Naive thymus-derived CD8-positive, alpha-beta T cell (primary cell): ENCODE measurements at regions of chr6 and their contacts with region 1.

Region 1: DNA sequence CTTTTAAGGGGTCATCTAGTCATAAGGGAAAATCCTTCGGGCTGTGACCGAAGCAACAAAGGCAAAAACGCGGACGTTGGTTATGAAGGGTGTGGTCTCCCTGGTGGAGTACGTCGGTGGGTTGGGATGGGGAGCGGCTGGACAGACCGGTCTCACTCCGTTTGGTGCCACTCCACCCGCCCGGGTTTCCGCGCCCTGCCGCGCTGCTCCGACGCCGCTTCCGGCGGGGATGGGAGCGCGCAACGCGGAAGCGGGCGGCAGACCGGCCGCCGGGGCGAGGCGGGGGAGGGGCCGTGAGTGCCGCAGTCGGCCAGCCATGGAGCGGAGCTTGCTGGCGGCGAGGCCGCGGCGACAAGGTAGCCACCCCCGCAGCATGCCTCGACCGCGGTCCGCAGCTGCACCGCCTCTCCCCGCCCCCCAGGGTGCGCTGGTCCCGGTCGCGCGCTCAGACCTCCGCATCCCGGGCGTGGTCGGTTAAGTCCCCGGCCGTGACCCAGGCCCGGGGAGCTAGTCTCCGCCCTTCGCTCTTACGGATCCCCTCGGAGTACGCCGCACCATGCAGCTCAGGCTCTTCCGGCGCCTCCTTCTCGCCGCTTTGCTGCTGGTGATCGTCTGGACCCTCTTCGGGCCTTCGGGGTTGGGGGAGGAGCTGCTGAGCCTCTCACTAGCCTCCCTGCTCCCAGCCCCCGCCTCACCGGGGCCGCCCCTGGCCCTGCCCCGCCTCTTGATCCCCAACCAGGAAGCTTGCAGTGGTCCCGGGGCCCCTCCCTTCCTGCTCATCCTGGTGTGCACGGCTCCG is at the start of gene B3GALT4:
- DNase-seq: peak; percentile 37 to 78 (median 64)
- ATAC-seq: peak; percentile 72 to 76
- H3K4me3 Mint-ChIP-seq: peak within 1 kb of the TSS; percentile 88 to 96 (median 92)
- H3K27ac Mint-ChIP-seq: peak within 1 kb of the TSS; percentile 72 to 97 (median 94)
- H3K4me1 Mint-ChIP-seq: peaks cover 34 to 80% (median 77%) of the 10 kb centered on the region in 4 donors
- H3K27me3 Mint-ChIP-seq: no peaks in the 10 kb centered on the region
- polyA plus RNA-seq, gene B3GALT4: 14.5 to 20.4 (median 18.7) TPM

Region 2: GRCh38 chr6:33288921-33289748 is 12.1 kb after region 1 on chr6 and contains the starts of genes PFDN6 and WDR46:
- POLR2A ChIA-PET with region 1: interaction called, 128 read pairs
- DNase-seq: peak; percentile 53 to 91 (median 81)
- ATAC-seq: peak; percentile 96 to 97
- H3K4me3 Mint-ChIP-seq: peak within 1 kb of the TSS; percentile 87 to 100 (median 99)
- H3K27ac Mint-ChIP-seq: peak within 1 kb of the TSS; percentile 84 to 97 (median 94)
- H3K4me1 Mint-ChIP-seq: peaks cover 22 to 51% (median 48%) of the 10 kb centered on the region in 4 donors
- H3K27me3 Mint-ChIP-seq: no peaks in the 10 kb centered on the region
- polyA plus RNA-seq, gene PFDN6: 33.4 to 38.2 (median 35.5) TPM
- polyA plus RNA-seq, gene WDR46: 71.3 to 83.7 (median 74.1) TPM

Region 3: GRCh38 chr6:33299237-33299944 is 22.3 kb after region 1 on chr6:
- POLR2A ChIA-PET with region 1: interaction called, 106 read pairs
- DNase-seq: peak; percentile 86 to 95 (median 92)
- ATAC-seq: peak; percentile 82 to 88
- H3K4me3 Mint-ChIP-seq: peak overlapping the region; percentile 94 to 100 (median 98)
- H3K27ac Mint-ChIP-seq: peak overlapping the region; percentile 94 to 100 (median 99)
- H3K4me1 Mint-ChIP-seq: peaks cover 20 to 49% (median 43%) of the 10 kb centered on the region in 4 donors
- H3K27me3 Mint-ChIP-seq: peaks cover 0 to 2% (median 0%) of the 10 kb centered on the region in 5 donors

Region 4: GRCh38 chr6:33425668-33426577 is 148.9 kb after region 1 on chr6:
- POLR2A ChIA-PET with region 1: interaction called, 13 read pairs
- DNase-seq: peak; percentile 70 to 94 (median 80)
- ATAC-seq: peak; percentile 54 to 57
- H3K4me3 Mint-ChIP-seq: peak overlapping the region; percentile 87 to 97 (median 91)
- H3K27ac Mint-ChIP-seq: peak overlapping the region; percentile 93 to 99 (median 99)
- H3K4me1 Mint-ChIP-seq: peaks cover 61 to 90% (median 79%) of the 10 kb centered on the region in 4 donors
- H3K27me3 Mint-ChIP-seq: no peaks in the 10 kb centered on the region